ENCODE measurements at regions of chr10 and their contacts with region 1.

Region 1: DNA sequence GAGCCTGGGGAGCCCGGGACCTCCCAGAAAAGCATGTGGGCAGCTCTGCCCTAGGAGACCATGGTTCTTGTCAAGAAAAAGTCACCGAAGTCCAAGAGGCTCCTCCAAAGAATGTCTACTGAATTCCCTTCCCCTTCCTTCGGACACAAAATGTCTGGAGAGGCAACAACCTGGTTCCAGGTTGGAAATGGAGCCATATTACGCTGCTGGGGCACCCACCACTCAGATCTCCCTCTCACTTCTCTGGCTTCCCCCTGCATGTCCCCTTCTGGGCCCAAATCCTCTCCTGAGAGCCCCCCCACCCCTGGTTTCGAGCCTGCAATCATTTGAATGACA is 52.6 kb downstream of the RGS10 start:
- DNase-seq: no peak
- H3K4me3 Mint-ChIP-seq: peak overlapping the region; percentile 65
- H3K27ac Mint-ChIP-seq: peak overlapping the region; percentile 85
- H3K4me1 Mint-ChIP-seq: peaks cover 45% of the 10 kb centered on the region
- H3K27me3 Mint-ChIP-seq: no peaks in the 10 kb centered on the region

Region 2: DNA sequence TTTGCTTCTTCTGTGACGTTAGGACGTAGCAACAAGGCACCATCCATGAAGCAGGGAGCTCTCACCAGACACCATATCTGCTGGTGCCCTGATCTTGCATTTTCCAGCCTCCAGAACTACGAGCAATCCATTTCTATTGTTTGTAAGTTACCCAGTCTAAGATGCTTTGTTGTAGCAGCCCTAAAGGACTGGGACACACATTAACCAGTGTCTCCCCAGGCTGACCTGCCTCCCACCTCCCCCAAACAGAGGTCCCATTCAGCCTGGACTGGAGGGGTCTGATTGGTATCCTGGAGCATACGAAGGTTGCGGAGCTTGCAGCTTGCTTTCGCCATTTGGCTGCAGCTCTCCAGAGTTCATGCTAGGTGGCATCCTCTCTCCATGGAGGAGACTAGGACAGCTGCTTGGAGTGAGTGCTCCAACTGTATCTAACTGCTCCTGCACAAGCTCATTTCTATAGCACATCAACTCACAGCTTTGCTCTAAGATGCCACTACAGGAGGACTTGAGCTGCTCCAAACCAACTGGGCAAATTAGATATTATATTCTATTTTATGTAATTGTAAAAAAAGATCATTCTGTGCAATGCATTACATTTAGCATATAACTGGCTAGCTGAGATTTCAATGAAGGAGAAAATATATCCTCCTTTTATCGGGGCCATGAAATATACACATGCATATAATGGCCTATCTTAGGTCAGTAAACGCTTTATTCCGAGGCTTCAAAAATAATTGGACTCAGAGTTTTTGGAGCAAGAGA is 290.5 kb before region 1 on chr10:
- CTCF ChIA-PET with region 1: interaction called, 26 read pairs
- POLR2A ChIA-PET with region 1: no interaction called
- DNase-seq: peak; percentile 53
- H3K4me3 Mint-ChIP-seq: no peak overlapping the region
- H3K27ac Mint-ChIP-seq: no peak overlapping the region
- H3K4me1 Mint-ChIP-seq: peaks cover 22% of the 10 kb centered on the region
- H3K27me3 Mint-ChIP-seq: peaks cover 2% of the 10 kb centered on the region

Region 3: DNA sequence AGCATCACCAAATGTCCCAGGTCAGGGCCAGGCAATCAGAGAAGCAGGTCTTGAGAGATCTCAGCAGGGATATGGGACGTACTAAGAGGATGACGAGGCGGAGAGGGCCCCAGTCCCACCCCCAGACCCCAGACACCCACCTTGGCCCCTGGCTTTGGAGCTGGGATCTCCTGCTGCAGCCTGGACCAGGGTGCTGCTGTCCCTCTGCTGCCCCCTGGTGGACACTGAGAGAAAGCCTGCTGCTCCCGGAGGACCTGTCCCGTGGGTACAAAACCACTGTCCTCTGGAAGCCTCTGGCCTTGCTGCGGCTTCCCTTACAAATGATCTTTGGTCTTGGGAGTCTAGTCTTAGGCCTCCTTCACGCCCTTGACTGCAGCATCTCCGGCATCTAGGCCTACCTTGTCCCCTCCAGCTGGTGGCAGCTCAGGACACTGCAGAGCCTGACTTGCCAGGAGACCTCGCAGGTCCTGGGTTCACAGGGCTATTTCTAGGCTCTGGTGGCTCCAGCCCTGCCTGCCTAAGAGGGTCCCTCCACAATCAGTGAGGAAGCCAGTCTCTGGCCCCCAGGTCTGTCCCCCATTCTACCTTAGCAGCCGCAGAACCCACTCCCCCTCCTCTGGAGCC is 44.5 kb before region 1 on chr10:
- CTCF ChIA-PET with region 1: interaction called, 22 read pairs
- POLR2A ChIA-PET with region 1: interaction called, 4 read pairs
- DNase-seq: peak; percentile 85
- H3K4me3 Mint-ChIP-seq: no peak overlapping the region
- H3K27ac Mint-ChIP-seq: no peak overlapping the region
- H3K4me1 Mint-ChIP-seq: peaks cover 15% of the 10 kb centered on the region
- H3K27me3 Mint-ChIP-seq: no peaks in the 10 kb centered on the region

Region 4: GRCh38 chr10:119478111-119478802 is 11.7 kb before region 1 on chr10:
- CTCF ChIA-PET with region 1: interaction called, 10 read pairs
- POLR2A ChIA-PET with region 1: interaction called, 7 read pairs
- DNase-seq: peak; percentile 47
- H3K4me3 Mint-ChIP-seq: peak overlapping the region; percentile 5
- H3K27ac Mint-ChIP-seq: peak overlapping the region; percentile 47
- H3K4me1 Mint-ChIP-seq: peaks cover 28% of the 10 kb centered on the region
- H3K27me3 Mint-ChIP-seq: peaks cover 12% of the 10 kb centered on the region

Region 5: DNA sequence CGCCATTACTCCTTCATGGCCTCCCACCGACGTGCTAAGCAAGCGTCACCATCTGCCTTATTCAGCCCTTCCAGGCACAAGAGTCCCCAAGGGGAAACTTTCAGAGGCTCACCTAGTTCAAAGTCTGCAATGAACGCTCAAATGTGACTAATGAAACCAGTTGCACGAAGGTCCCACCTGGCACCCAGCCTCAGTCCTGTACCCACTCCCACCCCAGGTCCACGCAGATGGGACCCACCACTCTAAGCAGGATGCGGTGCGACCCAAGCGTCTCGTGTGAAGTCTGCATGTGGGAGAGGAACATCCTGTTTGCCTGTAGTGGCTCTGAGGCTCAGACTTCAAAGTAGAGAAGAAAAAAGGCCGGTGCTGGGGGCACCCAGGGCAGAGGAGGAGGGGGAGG is 12.2 kb after region 1 on chr10:
- CTCF ChIA-PET with region 1: interaction called, 25 read pairs
- POLR2A ChIA-PET with region 1: interaction called, 14 read pairs
- DNase-seq: peak; percentile 84
- H3K4me3 Mint-ChIP-seq: peak overlapping the region; percentile 35
- H3K27ac Mint-ChIP-seq: peak overlapping the region; percentile 91
- H3K4me1 Mint-ChIP-seq: peaks cover 57% of the 10 kb centered on the region
- H3K27me3 Mint-ChIP-seq: no peaks in the 10 kb centered on the region

Region 6: DNA sequence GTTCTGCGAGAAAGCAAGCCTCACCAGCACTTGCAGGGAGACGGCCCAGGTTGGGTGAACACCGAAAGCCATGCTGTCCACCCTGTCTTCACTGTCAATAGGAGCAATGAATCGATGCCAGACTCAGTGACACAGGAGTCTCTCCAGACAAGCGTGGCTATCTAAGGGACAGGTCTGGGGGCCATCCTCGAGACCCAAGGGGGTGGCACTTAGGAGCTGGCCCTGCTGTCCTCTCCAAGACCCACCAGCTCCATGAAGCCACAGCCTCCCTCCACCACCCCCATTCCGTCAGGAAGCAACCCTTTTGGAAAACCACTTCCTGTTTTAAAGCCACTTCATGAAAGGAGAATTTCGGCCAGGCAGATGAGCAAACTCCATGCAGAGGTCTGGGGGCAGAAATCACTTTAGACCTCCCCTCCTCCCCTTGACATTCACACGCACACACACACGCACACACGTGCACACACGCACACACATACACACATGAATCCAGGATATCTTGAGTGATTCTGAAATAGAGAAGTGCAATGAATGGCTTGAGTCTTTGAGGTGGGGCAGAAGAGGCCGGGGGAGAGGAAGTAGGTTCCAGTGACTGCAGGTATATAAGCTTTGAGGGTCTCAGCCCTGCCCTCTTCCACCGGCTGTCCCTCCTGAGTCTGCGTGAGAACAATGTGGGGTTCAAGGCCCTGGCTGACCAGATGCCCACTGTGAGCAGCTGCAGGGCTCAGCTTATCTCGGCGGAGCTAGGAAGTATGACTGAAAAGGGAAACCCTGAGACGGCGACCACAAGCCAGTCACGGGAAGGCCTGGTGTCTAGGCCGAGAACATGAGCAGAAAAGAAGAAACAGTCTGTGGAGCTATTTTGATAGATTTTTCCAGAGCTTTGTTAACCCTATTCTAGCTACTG is 27.5 kb after region 1 on chr10:
- CTCF ChIA-PET with region 1: interaction called, 17 read pairs
- POLR2A ChIA-PET with region 1: interaction called, 13 read pairs
- DNase-seq: peak; percentile 75
- H3K4me3 Mint-ChIP-seq: peak overlapping the region; percentile 60
- H3K27ac Mint-ChIP-seq: peak overlapping the region; percentile 94
- H3K4me1 Mint-ChIP-seq: peaks cover 42% of the 10 kb centered on the region
- H3K27me3 Mint-ChIP-seq: no peaks in the 10 kb centered on the region

Measured in activated CD4-positive, alpha-beta memory T cell treated with anti-CD3 and anti-CD28 coated beads, Interleukin-2, amount 10 ng/mL, durations not matched to agents 7 days and 5 days (primary cell).